ENCODE measurements at regions of chr20 and their contacts with region 1.

Region 1: DNA sequence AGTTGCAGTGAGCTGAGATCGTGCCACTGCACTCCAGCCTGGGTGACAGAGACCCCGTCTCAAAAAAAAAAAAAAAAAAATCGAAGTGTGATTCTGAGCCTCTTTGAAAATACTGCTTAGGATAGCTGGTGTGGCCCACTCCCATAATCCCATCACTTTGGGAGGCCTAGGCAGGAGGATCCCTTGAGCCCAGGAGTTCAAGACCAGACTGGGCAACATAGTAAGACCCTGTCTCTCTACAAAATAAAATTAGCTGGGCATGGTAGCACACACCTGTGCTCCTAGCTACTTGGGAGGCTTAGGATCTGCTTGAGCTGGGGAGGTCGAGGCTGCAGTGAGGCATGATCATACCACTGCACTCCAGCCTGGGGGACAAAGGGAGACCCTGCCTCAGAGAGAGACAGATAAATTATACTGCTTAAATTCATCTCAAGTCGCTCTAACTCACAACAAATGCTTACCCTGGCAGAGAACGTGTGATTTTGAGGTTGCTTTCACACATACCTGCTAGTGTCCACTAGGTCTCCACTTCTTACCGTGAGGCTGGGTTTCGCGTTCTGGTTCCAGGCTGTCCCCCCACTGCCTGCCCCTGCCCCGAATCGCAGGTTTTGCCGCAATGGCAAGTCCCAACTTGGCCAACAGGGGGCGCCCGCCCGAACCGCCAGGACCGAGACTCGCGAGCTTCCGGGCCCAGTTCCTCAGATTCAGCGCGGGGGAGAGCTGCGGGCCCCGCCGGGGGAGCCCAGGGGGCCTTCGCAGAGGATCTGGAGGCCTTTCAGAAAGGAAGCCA is 12.3 kb upstream of the TMC2 start:
- DNase-seq: peak; percentile 78 to 87
- ATAC-seq: peak; percentile 80 to 86
- H3K4me3 ChIP-seq: peak overlapping the region; percentile 81
- H3K27ac ChIP-seq: peak overlapping the region; percentile 91 to 96
- H3K4me1 ChIP-seq: peaks cover 8% of the 10 kb centered on the region; the same call in 1 of the 3 replicates
- CTCF ChIP-seq: peak; percentile 96
- EP300 ChIP-seq: no peak
- POLR2A ChIP-seq: no peak; the same call in 1 of the 2 replicates
- RAD21 ChIP-seq: peak; percentile 51 to 68

Region 2: DNA sequence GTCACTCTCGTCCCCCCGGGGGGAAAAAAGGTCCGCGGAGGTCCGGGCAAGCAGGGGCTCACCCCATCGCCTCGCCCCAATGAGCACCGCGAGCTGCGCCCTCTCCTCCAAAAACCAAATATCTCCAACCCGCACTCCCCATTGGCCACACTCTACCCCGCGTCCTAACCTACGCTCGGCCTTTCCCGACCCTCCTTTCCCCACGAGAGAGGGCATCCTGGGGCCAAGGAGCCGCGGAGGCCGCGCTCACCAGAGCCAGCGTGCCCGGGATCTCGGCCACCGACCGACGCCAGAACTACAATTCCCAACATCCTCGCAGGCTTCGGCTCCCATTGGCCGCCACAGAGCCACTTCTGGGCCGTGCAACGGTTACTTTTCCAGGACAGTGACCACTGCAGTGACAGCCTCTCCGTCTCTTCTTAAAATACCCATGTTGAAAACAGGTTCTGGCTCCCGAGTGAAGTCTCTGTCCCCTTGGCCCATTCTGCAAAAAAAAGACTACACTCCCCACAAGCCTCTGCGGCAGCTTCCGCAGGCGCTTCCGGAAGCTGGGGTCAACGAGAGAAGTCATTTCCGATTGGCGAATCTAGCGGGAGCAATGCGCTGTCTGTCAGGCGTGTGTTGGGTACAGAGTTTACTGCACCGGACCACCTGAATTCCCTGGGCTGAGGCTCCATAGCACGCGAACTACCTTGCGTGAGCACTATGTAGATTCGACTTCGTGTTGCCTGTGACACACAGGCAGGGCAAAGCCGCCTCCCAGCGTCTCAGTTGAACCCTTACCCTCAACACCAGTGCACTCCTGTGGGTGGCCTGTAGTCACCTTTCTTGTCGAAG is 15.3 kb before region 1 on chr20 and contains the start of gene ZNF343:
- CTCF ChIA-PET with region 1: interaction called, 149 read pairs
- POLR2A ChIA-PET with region 1: interaction called, 4 read pairs
- DNase-seq: peak; percentile 86 to 98
- ATAC-seq: peak; percentile 98 to 99
- H3K4me3 ChIP-seq: peak within 1 kb of the TSS; percentile 68
- H3K27ac ChIP-seq: peak within 1 kb of the TSS; percentile 86 to 89
- H3K4me1 ChIP-seq: peaks cover 12% of the 10 kb centered on the region
- CTCF ChIP-seq: no peak
- EP300 ChIP-seq: no peak
- POLR2A ChIP-seq: peak; percentile 84
- RAD21 ChIP-seq: no peak
- polyA plus RNA-seq, gene ZNF343: 19.0 and 20.5 TPM in 2 replicates

Region 3: GRCh38 chr20:2544211-2544610 is 20.1 kb after region 1 on chr20:
- CTCF ChIA-PET with region 1: interaction called, 17 read pairs
- POLR2A ChIA-PET with region 1: interaction called, 3 read pairs
- DNase-seq: no peak
- ATAC-seq: no peak
- H3K4me3 ChIP-seq: no peak overlapping the region
- H3K27ac ChIP-seq: no peak overlapping the region
- H3K4me1 ChIP-seq: no peaks in the 10 kb centered on the region
- CTCF ChIP-seq: no peak
- EP300 ChIP-seq: no peak
- POLR2A ChIP-seq: no peak
- RAD21 ChIP-seq: no peak

Region 4: DNA sequence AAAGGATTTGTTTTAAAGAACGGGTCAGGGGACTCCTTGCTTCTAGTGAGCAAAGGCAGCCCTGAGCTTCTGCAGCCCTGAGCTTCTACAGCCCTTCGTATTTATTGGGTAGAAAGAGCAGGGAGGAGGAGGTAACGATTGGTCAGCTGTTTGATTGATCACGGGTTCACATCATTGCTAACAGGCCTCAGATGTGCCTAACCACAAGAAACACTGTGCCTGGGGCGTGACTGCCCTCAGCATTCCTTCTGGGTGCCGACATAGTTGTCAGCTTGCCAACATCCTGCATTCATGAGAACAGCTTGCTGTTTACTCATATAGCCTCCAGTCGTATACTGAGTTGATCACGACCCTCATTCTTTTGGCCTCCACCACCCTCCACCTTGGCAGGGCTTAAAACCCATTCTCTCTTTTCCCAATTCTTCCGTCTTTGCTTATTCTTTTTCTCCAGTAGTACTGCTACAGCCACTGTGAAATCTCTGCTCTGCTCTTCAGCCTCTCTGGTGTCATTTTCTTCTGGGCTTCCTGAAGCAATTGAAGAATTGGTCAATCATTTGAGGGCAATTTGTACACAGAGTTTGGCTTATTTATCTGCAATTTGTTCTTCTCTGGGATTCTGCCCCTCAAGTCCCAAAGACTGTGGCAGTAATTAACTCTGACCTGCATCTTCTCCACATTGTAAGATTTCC is 102.9 kb after region 1 on chr20:
- CTCF ChIA-PET with region 1: interaction called, 62 read pairs
- POLR2A ChIA-PET with region 1: interaction called, 4 read pairs
- DNase-seq: peak in 1 of 2 experiments; percentile 89
- ATAC-seq: peak; percentile 75 to 86
- H3K4me3 ChIP-seq: no peak overlapping the region
- H3K27ac ChIP-seq: peak overlapping the region; percentile 50 to 65
- H3K4me1 ChIP-seq: peaks cover 12% of the 10 kb centered on the region
- CTCF ChIP-seq: no peak
- EP300 ChIP-seq: no peak
- POLR2A ChIP-seq: no peak
- RAD21 ChIP-seq: no peak

Region 5: GRCh38 chr20:2651772-2652723 is 127.9 kb after region 1 on chr20 and contains the start of gene NOP56:
- CTCF ChIA-PET with region 1: interaction called, 165 read pairs
- POLR2A ChIA-PET with region 1: interaction called, 7 read pairs
- DNase-seq: peak; percentile 85 to 97
- ATAC-seq: peak; percentile 88 to 95
- H3K4me3 ChIP-seq: peak within 1 kb of the TSS; percentile 78
- H3K27ac ChIP-seq: peak within 1 kb of the TSS; percentile 95 to 96
- H3K4me1 ChIP-seq: peaks cover 34% of the 10 kb centered on the region
- CTCF ChIP-seq: no peak
- EP300 ChIP-seq: 0 out of 5 replicates have a peak, but pooled peaks of 1 of the 2 experiments have one; percentile 2
- POLR2A ChIP-seq: peak; percentile 99
- RAD21 ChIP-seq: no peak
- polyA plus RNA-seq, gene NOP56: 471 and 571 TPM in 2 replicates

Region 6: GRCh38 chr20:2780948-2781347 is 256.8 kb after region 1 on chr20:
- CTCF ChIA-PET with region 1: no interaction called
- POLR2A ChIA-PET with region 1: no interaction called
- DNase-seq: no peak
- ATAC-seq: peak; percentile 46 to 67; a peak in 3 of 6 replicates
- H3K4me3 ChIP-seq: no peak overlapping the region
- H3K27ac ChIP-seq: no peak overlapping the region
- H3K4me1 ChIP-seq: 0 out of 3 replicates have a peak, but pooled peaks cover 3% of the 10 kb centered on the region
- CTCF ChIP-seq: peak; percentile 33; the same call in 2 of the 3 replicates
- EP300 ChIP-seq: no peak
- POLR2A ChIP-seq: no peak
- RAD21 ChIP-seq: no peak

Measured in A549 (cell line).